ENCODE measurements at regions of chr6 and their contacts with region 1.

Region 1: DNA sequence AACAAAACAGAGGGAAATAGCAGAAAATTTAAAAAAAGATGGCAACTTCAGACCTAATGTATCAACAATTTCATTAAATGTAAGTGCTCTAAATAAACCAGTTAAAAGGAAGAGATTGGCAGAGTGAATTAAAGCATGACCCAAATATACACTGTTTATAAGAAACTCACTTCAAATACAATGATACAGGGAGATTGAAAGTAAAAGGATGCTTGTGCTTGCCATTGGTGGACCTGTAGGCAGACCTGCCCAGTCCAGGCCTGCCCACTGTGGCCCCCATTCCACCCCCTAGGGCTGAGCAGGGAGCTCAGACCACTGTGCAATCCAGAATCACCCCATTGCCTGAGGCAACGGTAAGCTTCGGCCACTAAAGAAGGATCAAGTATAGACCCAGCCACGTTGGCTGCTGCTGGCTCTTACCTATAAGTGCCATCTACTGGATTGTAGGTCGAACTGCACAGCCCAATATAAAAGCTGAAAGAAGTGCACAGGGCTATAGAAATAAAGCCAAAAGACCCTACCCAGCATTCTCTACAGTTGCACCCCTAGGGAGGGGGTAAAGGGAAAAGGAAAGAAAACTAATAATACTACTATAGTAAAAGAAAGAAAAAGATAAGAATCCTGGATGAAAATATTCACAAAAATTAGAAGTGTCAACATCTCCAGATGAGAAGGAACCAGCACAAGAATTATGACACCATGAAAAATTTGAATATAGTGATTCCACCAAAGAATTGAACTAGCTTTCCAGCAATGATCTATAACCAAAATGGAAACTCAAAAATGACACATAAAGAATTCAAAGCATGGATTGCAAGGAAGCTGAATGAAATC is 36.1 kb downstream of the PSMB1 start:
- DNase-seq: peak in 4 of 5 donors; percentile 6 to 60 (median 44)
- H3K4me3 ChIP-seq: no peak overlapping the region
- H3K4me3 Mint-ChIP-seq: peak overlapping the region in 6 of 7 donors; percentile 37 to 86 (median 60)
- H3K27ac ChIP-seq: no peak overlapping the region
- H3K27ac Mint-ChIP-seq: peak overlapping the region in 1 of 8 donors; percentile 65
- H3K4me1 ChIP-seq: no peaks in the 10 kb centered on the region
- H3K4me1 Mint-ChIP-seq: no peaks in the 10 kb centered on the region
- H3K27me3 ChIP-seq: no peaks in the 10 kb centered on the region
- H3K27me3 Mint-ChIP-seq: peaks cover 11 to 45% of the 10 kb centered on the region in 2 donors

Region 2: GRCh38 chr6:169789982-169790927 is 726.7 kb before region 1 on chr6:
- CTCF ChIA-PET with region 1: interaction called, 23 read pairs
- POLR2A ChIA-PET with region 1: no interaction called
- DNase-seq: peak; percentile 56 to 76 (median 63)
- H3K4me3 ChIP-seq: peak overlapping the region; percentile 81
- H3K4me3 Mint-ChIP-seq: peak overlapping the region; percentile 81 to 94 (median 90)
- H3K27ac ChIP-seq: no peak overlapping the region
- H3K27ac Mint-ChIP-seq: peak overlapping the region in 4 of 8 donors; percentile 3 to 63 (median 54)
- H3K4me1 ChIP-seq: peaks cover 10% of the 10 kb centered on the region
- H3K4me1 Mint-ChIP-seq: peaks cover 11 to 22% (median 17%) of the 10 kb centered on the region in 3 donors
- H3K27me3 ChIP-seq: no peaks in the 10 kb centered on the region
- H3K27me3 Mint-ChIP-seq: peaks cover 16 to 41% of the 10 kb centered on the region in 2 donors

Region 3: GRCh38 chr6:169831450-169832246 is 685.4 kb before region 1 on chr6:
- CTCF ChIA-PET with region 1: interaction called, 21 read pairs
- POLR2A ChIA-PET with region 1: no interaction called
- DNase-seq: peak; percentile 49 to 72 (median 53)
- H3K4me3 ChIP-seq: no peak overlapping the region
- H3K4me3 Mint-ChIP-seq: no peak overlapping the region
- H3K27ac ChIP-seq: no peak overlapping the region
- H3K27ac Mint-ChIP-seq: no peak overlapping the region
- H3K4me1 ChIP-seq: no peaks in the 10 kb centered on the region
- H3K4me1 Mint-ChIP-seq: peaks cover 2 to 5% (median 3%) of the 10 kb centered on the region in 3 donors
- H3K27me3 ChIP-seq: peaks cover 14% of the 10 kb centered on the region
- H3K27me3 Mint-ChIP-seq: peaks cover 16 to 59% of the 10 kb centered on the region in 2 donors

Region 4: DNA sequence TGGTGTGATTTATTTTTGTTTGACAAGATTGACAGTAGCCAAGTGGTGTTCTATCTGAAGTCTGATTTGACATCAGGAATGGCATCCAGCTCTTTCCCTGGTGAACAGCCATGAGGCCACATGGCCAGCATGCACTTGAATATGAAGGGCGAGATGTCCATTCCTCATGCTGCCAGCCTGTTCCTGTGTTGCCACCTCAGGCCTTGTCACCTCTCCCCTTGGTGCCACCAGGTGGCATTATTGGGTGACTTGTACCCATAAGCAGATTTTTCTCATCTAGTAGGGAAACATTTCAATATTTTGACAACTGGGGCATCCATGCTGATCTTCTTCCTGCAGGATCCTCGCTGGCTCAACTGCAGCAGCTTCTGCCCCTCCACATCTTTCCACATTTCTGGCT is 566.4 kb before region 1 on chr6:
- CTCF ChIA-PET with region 1: interaction called, 10 read pairs
- POLR2A ChIA-PET with region 1: no interaction called
- DNase-seq: peak in 1 of 5 donors; percentile 39
- H3K4me3 ChIP-seq: no peak overlapping the region
- H3K4me3 Mint-ChIP-seq: no peak overlapping the region
- H3K27ac ChIP-seq: no peak overlapping the region
- H3K27ac Mint-ChIP-seq: no peak overlapping the region
- H3K4me1 ChIP-seq: no peaks in the 10 kb centered on the region
- H3K4me1 Mint-ChIP-seq: no peaks in the 10 kb centered on the region
- H3K27me3 ChIP-seq: no peaks in the 10 kb centered on the region
- H3K27me3 Mint-ChIP-seq: peaks cover 0 to 2% of the 10 kb centered on the region in 2 donors

Region 5: GRCh38 chr6:170542031-170542719 is 25.2 kb after region 1 on chr6:
- CTCF ChIA-PET with region 1: no interaction called
- POLR2A ChIA-PET with region 1: no interaction called
- DNase-seq: no peak
- H3K4me3 ChIP-seq: no peak overlapping the region
- H3K4me3 Mint-ChIP-seq: no peak overlapping the region
- H3K27ac ChIP-seq: no peak overlapping the region
- H3K27ac Mint-ChIP-seq: peak overlapping the region in 1 of 8 donors; percentile 17
- H3K4me1 ChIP-seq: no peaks in the 10 kb centered on the region
- H3K4me1 Mint-ChIP-seq: peaks cover 29 to 49% (median 48%) of the 10 kb centered on the region in 3 donors
- H3K27me3 ChIP-seq: no peaks in the 10 kb centered on the region
- H3K27me3 Mint-ChIP-seq: no peaks in the 10 kb centered on the region

Measured in CD8-positive, alpha-beta memory T cell (primary cell).